PC-3 (cell line): ENCODE measurements at regions of chr10 and their contacts with region 1.

Region 1: DNA sequence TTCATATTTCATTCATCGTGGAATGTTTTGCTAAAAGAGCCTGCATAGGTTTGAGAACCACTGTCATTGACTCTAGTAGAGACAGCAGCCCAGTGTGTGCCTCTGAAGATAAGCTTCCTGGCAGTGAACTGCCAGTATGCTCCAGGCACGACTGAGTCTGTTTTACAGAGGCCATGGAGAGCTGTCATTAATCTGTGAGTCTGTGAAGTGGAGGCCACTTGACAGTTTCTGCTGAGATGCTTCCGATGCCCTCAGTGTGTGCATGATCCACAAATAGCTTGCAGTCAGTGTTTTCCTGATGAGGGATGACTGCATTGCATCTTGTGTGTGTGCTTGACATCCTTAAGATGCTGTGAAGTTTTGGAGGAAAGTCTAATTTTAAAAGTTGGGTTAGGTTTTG is 162.2 kb downstream of the PFKFB3 start:
- DNase-seq: no peak
- ATAC-seq: no peak
- H3K4me3 ChIP-seq: no peak overlapping the region
- H3K27ac ChIP-seq: no peak overlapping the region
- H3K4me1 ChIP-seq: no peaks in the 10 kb centered on the region
- H3K27me3 ChIP-seq: no peaks in the 10 kb centered on the region
- CTCF ChIP-seq: no peak

Region 2: GRCh38 chr10:5354068-5354467 is 1010.8 kb before region 1 on chr10:
- CTCF ChIA-PET with region 1: no interaction called
- POLR2A ChIA-PET with region 1: no interaction called
- intact Hi-C with region 1: no loop called
- DNase-seq: no peak
- ATAC-seq: no peak
- H3K4me3 ChIP-seq: no peak overlapping the region
- H3K27ac ChIP-seq: no peak overlapping the region
- H3K4me1 ChIP-seq: no peaks in the 10 kb centered on the region
- H3K27me3 ChIP-seq: no peaks in the 10 kb centered on the region
- CTCF ChIP-seq: no peak

Region 3: DNA sequence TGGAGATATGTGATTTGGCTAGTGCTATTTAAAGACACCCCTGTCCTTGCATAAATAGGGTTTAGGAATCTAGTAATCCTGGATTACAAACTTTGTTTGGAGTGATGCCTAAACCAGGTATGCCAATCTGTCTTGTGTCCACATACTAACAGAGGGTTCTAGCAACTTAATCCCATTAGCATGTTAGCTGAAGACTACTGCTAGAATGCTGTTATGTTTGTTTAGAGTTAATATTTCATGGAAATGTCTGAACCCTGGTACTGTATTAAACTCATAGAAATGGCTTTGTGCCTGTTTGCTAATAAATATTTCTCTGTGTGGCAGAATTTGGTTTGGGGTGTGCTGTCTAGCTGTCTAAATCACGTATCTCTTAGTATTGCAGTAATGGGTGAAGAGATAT is 11.4 kb before region 1 on chr10:
- CTCF ChIA-PET with region 1: no interaction called
- POLR2A ChIA-PET with region 1: interaction called, 18 read pairs
- intact Hi-C with region 1: no loop called
- DNase-seq: no peak
- ATAC-seq: no peak
- H3K4me3 ChIP-seq: no peak overlapping the region
- H3K27ac ChIP-seq: no peak overlapping the region
- H3K4me1 ChIP-seq: no peaks in the 10 kb centered on the region
- H3K27me3 ChIP-seq: no peaks in the 10 kb centered on the region
- CTCF ChIP-seq: no peak

Region 4: DNA sequence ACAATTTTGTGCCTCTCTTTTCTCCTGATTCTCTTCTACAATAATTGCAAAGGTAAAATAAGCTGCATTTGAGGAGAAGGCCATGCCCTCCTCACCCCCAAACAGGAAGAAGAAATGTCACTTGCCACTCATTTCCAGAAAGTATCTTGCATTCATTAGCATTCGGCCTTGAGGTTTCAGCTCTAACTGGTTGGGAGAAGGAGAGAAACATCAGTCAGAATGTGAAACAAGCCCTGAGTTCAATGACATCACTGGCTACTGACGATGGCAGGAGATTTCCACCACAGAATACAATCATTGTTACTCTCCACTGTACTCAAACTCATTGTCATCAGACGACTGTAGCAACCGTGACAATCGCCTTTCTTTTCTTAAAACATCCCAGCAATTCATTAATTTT is 142.4 kb after region 1 on chr10:
- CTCF ChIA-PET with region 1: no interaction called
- POLR2A ChIA-PET with region 1: no interaction called
- intact Hi-C with region 1: no loop called
- DNase-seq: no peak
- ATAC-seq: no peak
- H3K4me3 ChIP-seq: no peak overlapping the region
- H3K27ac ChIP-seq: no peak overlapping the region
- H3K4me1 ChIP-seq: no peaks in the 10 kb centered on the region
- H3K27me3 ChIP-seq: peaks cover 61% of the 10 kb centered on the region
- CTCF ChIP-seq: no peak

Region 5: DNA sequence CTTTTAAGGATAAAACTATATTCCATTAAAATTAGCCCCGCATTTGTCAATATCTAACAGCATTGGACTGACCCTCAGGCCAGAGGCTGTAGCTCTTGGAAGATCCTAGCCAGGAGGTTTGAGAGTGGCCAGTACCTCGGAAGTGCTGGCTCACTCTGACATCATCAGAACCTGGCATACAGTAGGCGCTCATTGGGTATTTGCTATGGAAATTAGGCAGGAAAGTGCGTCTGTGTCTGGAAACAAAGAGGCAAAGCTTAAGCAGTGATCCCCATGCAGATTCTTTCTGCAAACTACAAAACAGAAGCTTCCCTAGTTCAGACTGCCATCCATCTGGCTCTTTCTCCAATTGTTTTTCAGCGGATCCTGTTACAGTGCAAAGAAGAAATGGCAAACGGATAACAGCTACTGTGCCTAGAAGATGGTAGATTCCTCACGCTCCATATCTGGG is 216.9 kb after region 1 on chr10:
- CTCF ChIA-PET with region 1: no interaction called
- POLR2A ChIA-PET with region 1: no interaction called
- intact Hi-C with region 1: no loop called
- DNase-seq: no peak
- ATAC-seq: no peak
- H3K4me3 ChIP-seq: no peak overlapping the region
- H3K27ac ChIP-seq: no peak overlapping the region
- H3K4me1 ChIP-seq: no peaks in the 10 kb centered on the region
- H3K27me3 ChIP-seq: peaks cover 31% of the 10 kb centered on the region; the same call in 1 of the 2 replicates
- CTCF ChIP-seq: no peak